GM12878 (cell line): ENCODE measurements at regions of chr6 and their contacts with region 1.

Region 1: DNA sequence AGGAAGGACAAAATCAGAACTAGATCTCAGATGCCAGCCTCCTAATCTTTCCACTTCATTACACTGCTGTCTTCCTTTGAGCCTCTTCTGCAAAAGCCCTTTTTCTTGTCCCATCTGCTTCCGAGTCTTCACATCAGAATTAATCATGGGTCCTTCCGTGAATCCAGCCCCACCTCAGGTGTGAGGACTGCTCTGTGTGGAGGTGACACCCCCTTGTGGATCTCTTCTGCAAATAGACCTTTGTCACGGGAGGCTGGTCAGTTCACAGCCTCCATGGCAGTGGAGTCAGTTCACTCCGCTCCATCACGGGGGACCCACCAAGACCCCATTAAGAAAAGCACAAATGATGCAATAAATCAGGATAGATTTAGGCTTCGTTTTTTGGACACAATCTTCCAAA is 171.1 kb downstream of the ADAT2 start:
- DNase-seq: no peak
- ATAC-seq: peak; percentile 83
- H3K4me3 ChIP-seq: no peak overlapping the region
- H3K27ac ChIP-seq: no peak overlapping the region
- H3K4me1 ChIP-seq: peaks cover 7% of the 10 kb centered on the region; the same call in 1 of the 2 replicates
- H3K27me3 ChIP-seq: no peaks in the 10 kb centered on the region
- CTCF ChIP-seq: peak; percentile 37 to 58 (median 52); a peak in 4 of 6 replicates
- EP300 ChIP-seq: no peak
- POLR2A ChIP-seq: no peak
- RAD21 ChIP-seq: peak; percentile 69

Region 2: DNA sequence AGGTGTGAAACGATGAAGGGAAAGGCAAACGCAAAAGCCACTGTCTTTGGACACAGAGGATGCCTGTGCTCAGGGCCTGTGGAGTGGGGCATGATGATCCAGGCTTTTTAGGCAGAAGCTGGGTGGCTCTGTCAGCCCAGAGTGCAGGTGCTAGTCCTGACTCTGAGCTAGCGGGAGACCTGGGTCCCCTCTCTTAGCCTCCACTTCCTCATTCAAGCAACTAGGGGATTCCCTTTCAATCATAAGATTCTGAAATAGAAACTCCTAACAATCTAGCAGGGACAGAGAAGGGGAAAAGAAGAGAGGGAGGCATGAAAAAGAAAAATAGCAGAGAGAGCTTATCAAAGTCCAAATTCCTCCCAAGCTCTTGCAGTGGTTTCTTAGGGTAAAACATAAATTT is 326.8 kb before region 1 on chr6:
- CTCF ChIA-PET with region 1: no interaction called
- POLR2A ChIA-PET with region 1: no interaction called
- RAD21 ChIA-PET with region 1: interaction called, 3 read pairs
- SMC1A ChIA-PET with region 1: interaction called, 3 read pairs
- in situ Hi-C with region 1: no loop called
- intact Hi-C with region 1: loop called (anchors 10 kb)
- DNase-seq: no peak
- ATAC-seq: peak; percentile 86
- H3K4me3 ChIP-seq: no peak overlapping the region
- H3K27ac ChIP-seq: no peak overlapping the region; the same call in 1 of the 2 replicates
- H3K4me1 ChIP-seq: peaks cover 21% of the 10 kb centered on the region
- H3K27me3 ChIP-seq: no peaks in the 10 kb centered on the region
- CTCF ChIP-seq: 0 out of 6 replicates have a peak, but pooled peaks of 1 of the 3 experiments have one; percentile 7
- EP300 ChIP-seq: peak; percentile 14 to 63; a peak in 1 of 4 replicates
- POLR2A ChIP-seq: no peak
- RAD21 ChIP-seq: peak; percentile 34; the same call in 1 of the 2 replicates

Region 3: GRCh38 chr6:143232849-143233248 is 46.5 kb before region 1 on chr6:
- CTCF ChIA-PET with region 1: interaction called, 12 read pairs
- POLR2A ChIA-PET with region 1: no interaction called
- RAD21 ChIA-PET with region 1: no interaction called
- SMC1A ChIA-PET with region 1: interaction called, 7 read pairs
- in situ Hi-C with region 1: no loop called
- intact Hi-C with region 1: no loop called
- DNase-seq: peak; percentile 2
- ATAC-seq: peak; percentile 89
- H3K4me3 ChIP-seq: no peak overlapping the region
- H3K27ac ChIP-seq: no peak overlapping the region
- H3K4me1 ChIP-seq: no peaks in the 10 kb centered on the region
- H3K27me3 ChIP-seq: no peaks in the 10 kb centered on the region
- CTCF ChIP-seq: peak; percentile 62 to 70 (median 67)
- EP300 ChIP-seq: no peak
- POLR2A ChIP-seq: no peak
- RAD21 ChIP-seq: peak; percentile 82

Region 4: DNA sequence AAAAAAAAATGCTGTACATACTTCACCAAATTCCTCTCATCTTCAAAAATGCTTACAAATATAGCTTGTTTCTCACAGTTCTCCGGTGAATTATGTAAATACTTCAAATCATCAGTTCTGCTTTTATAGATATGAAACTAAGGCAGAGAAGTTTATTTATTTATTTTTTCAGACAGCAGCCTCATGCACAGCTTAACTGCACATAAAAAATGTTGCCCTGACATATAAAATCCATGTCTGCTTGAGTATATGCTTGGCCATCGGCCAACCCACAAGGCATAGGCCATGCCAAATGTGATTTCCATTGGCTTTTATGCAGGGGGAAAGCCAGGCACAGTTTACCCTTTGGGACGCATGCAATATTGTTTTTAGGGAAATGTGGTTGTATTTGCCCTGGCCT is 341.1 kb after region 1 on chr6:
- CTCF ChIA-PET with region 1: no interaction called
- POLR2A ChIA-PET with region 1: no interaction called
- RAD21 ChIA-PET with region 1: no interaction called
- SMC1A ChIA-PET with region 1: no interaction called
- in situ Hi-C with region 1: no loop called
- intact Hi-C with region 1: no loop called
- DNase-seq: no peak
- ATAC-seq: no peak
- H3K4me3 ChIP-seq: no peak overlapping the region
- H3K27ac ChIP-seq: no peak overlapping the region
- H3K4me1 ChIP-seq: 0 out of 2 replicates have a peak, but pooled peaks cover 2% of the 10 kb centered on the region
- H3K27me3 ChIP-seq: no peaks in the 10 kb centered on the region
- CTCF ChIP-seq: no peak
- EP300 ChIP-seq: no peak
- POLR2A ChIP-seq: no peak
- RAD21 ChIP-seq: no peak